ENCODE measurements at regions of chr6 and their contacts with region 1.

Region 1: GRCh38 chr6:3125815-3126214 is 7.3 kb downstream of the BPHL start:
- DNase-seq: no peak
- H3K4me3 ChIP-seq: no peak overlapping the region
- H3K27ac ChIP-seq: no peak overlapping the region
- H3K4me1 ChIP-seq: peaks cover 25% of the 10 kb centered on the region
- CTCF ChIP-seq: no peak

Region 2: GRCh38 chr6:3009930-3010329 is 115.9 kb before region 1 on chr6:
- CTCF ChIA-PET with region 1: no interaction called
- POLR2A ChIA-PET with region 1: no interaction called
- intact Hi-C with region 1: no loop called
- DNase-seq: no peak
- H3K4me3 ChIP-seq: no peak overlapping the region
- H3K27ac ChIP-seq: no peak overlapping the region
- H3K4me1 ChIP-seq: no peaks in the 10 kb centered on the region
- CTCF ChIP-seq: no peak

Region 3: GRCh38 chr6:3162565-3163247 is 36.9 kb after region 1 on chr6:
- CTCF ChIA-PET with region 1: no interaction called
- POLR2A ChIA-PET with region 1: no interaction called
- intact Hi-C with region 1: loop called (anchors 2 kb)
- DNase-seq: peak; percentile 82
- H3K4me3 ChIP-seq: peak overlapping the region; percentile 83
- H3K27ac ChIP-seq: peak overlapping the region; percentile 78
- H3K4me1 ChIP-seq: peaks cover 43% of the 10 kb centered on the region
- CTCF ChIP-seq: peak; percentile 27; the same call in 1 of the 2 replicates

Region 4: GRCh38 chr6:3239110-3239830 is 113.5 kb after region 1 on chr6:
- CTCF ChIA-PET with region 1: no interaction called
- POLR2A ChIA-PET with region 1: no interaction called
- intact Hi-C with region 1: loop called (anchors 5 kb)
- DNase-seq: no peak
- H3K4me3 ChIP-seq: no peak overlapping the region
- H3K27ac ChIP-seq: no peak overlapping the region
- H3K4me1 ChIP-seq: peaks cover 24% of the 10 kb centered on the region
- CTCF ChIP-seq: no peak

Region 5: GRCh38 chr6:3258720-3259490 is 133.1 kb after region 1 on chr6 and contains the start of gene PSMG4:
- CTCF ChIA-PET with region 1: no interaction called
- POLR2A ChIA-PET with region 1: interaction called, 4 read pairs
- intact Hi-C with region 1: loop called (anchors 2 kb)
- DNase-seq: peak; percentile 90
- H3K4me3 ChIP-seq: peak within 1 kb of the TSS; percentile 95
- H3K27ac ChIP-seq: peak within 1 kb of the TSS; percentile 49
- H3K4me1 ChIP-seq: peaks cover 15% of the 10 kb centered on the region
- CTCF ChIP-seq: no peak
- total RNA-seq, gene PSMG4: 58.3 and 65.4 TPM in 2 replicates

Region 6: GRCh38 chr6:3390698-3391097 is 264.9 kb after region 1 on chr6:
- CTCF ChIA-PET with region 1: no interaction called
- POLR2A ChIA-PET with region 1: no interaction called
- intact Hi-C with region 1: no loop called
- DNase-seq: no peak
- H3K4me3 ChIP-seq: no peak overlapping the region
- H3K27ac ChIP-seq: no peak overlapping the region
- H3K4me1 ChIP-seq: no peaks in the 10 kb centered on the region
- CTCF ChIP-seq: no peak

Region 7: DNA sequence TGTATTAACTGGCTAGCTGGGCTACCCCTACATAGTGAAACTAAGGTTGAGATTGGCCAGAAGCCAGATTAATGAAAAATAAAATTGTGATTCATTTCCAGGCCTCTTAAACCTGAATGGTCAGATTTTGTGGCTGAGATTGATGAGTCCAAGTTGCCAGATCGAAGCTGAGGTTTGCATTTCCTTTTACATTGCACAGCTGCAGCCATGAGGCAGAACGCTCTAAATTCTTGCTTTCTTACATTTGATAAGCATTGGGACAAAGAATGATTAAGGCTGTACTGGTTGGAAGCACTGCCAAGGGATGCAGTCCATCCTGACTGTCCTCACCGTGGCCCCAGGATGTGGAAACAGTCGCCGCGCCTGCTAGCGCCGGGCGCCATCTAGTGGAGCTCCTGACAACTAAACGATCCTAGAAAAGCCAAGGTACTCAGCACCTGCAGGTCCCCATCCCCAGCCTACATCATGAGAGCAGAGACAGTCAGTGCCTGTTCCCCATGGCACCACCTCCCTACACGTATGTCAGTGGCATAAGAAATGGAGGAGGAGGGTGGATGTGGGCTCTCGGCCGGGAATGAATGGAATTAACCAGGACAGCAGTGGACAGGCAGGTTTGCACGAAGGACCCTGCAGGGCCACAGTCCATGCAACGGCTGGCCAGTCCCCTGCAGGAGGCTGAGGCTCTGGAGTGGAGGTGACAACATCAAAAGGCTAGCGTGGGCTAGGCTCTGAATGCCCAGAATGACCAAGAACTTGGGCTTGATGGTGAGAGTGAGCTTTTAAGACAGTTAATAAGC is 606.7 kb after region 1 on chr6:
- CTCF ChIA-PET with region 1: no interaction called
- POLR2A ChIA-PET with region 1: no interaction called
- intact Hi-C with region 1: loop called (anchors 5 kb)
- DNase-seq: peak; percentile 65
- H3K4me3 ChIP-seq: no peak overlapping the region
- H3K27ac ChIP-seq: no peak overlapping the region
- H3K4me1 ChIP-seq: no peaks in the 10 kb centered on the region
- CTCF ChIP-seq: peak; percentile 92

Measured in OCI-LY7 (cell line).